Breast epithelium (tissue), 4 donors: ENCODE measurements at regions of chr13 and their contacts with region 1.

Region 1: GRCh38 chr13:23871616-23872220 is 17.5 kb downstream of the MIPEP start:
- DNase-seq: no peak
- H3K4me3 ChIP-seq: no peak overlapping the region
- H3K27ac ChIP-seq: no peak overlapping the region
- H3K4me1 ChIP-seq: no peaks in the 10 kb centered on the region
- H3K27me3 ChIP-seq: no peaks in the 10 kb centered on the region
- CTCF ChIP-seq: peak; percentile 69 to 81 (median 74)
- POLR2A ChIP-seq: no peak

Region 2: GRCh38 chr13:23466144-23467002 is 405.3 kb before region 1 on chr13:
- intact Hi-C with region 1: loop called (anchors 10 kb)
- DNase-seq: peak; percentile 37 to 61
- H3K4me3 ChIP-seq: peak overlapping the region; percentile 40 to 67 (median 59)
- H3K27ac ChIP-seq: peak overlapping the region; percentile 60 to 70
- H3K4me1 ChIP-seq: peaks cover 0 to 6% of the 10 kb centered on the region in 2 donors
- H3K27me3 ChIP-seq: no peaks in the 10 kb centered on the region
- CTCF ChIP-seq: peak; percentile 45 to 70 (median 70)
- POLR2A ChIP-seq: no peak

Region 3: GRCh38 chr13:23921451-23921888 is 49.8 kb after region 1 on chr13:
- intact Hi-C with region 1: no loop called
- DNase-seq: no peak
- H3K4me3 ChIP-seq: no peak overlapping the region
- H3K27ac ChIP-seq: no peak overlapping the region
- H3K4me1 ChIP-seq: no peaks in the 10 kb centered on the region
- H3K27me3 ChIP-seq: no peaks in the 10 kb centered on the region
- CTCF ChIP-seq: peak in 2 of 3 donors; percentile 36 to 38
- POLR2A ChIP-seq: no peak